ENCODE measurements at regions of chr22 and their contacts with region 1.

Region 1: DNA sequence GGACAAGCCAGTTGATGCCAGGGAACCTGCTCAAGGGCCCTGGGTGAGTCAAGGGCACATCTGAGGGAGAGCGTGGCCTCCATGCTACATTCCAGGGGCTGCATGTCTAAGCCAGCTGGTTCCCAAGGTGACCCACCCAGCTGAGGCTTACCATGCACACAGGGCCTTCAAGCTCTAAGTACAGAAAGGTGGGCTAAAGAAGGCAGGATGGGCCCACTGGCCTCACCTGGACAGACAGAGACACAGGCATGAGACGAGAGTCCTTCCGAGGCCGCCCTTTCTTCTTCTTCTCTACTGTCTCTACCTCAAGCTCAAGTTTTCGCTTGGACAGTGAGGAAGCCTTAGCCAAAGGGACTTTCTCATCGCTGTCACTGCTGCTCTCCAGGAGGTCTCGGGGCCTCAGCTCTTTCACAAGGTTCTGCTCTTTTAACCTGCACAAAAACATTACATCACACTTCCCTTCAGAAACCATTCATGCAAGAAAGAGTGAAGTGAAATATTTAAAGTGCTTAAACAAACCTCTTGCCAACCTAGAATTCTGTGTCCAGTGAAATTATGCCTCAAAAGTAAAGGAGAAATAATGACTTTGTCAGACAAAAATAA is 69.9 kb downstream of the HIRA start:
- DNase-seq: no peak
- ATAC-seq: no peak
- H3K4me3 ChIP-seq: no peak overlapping the region
- H3K27ac ChIP-seq: no peak overlapping the region
- H3K4me1 ChIP-seq: no peaks in the 10 kb centered on the region
- H3K27me3 ChIP-seq: no peaks in the 10 kb centered on the region
- CTCF ChIP-seq: no peak

Region 2: DNA sequence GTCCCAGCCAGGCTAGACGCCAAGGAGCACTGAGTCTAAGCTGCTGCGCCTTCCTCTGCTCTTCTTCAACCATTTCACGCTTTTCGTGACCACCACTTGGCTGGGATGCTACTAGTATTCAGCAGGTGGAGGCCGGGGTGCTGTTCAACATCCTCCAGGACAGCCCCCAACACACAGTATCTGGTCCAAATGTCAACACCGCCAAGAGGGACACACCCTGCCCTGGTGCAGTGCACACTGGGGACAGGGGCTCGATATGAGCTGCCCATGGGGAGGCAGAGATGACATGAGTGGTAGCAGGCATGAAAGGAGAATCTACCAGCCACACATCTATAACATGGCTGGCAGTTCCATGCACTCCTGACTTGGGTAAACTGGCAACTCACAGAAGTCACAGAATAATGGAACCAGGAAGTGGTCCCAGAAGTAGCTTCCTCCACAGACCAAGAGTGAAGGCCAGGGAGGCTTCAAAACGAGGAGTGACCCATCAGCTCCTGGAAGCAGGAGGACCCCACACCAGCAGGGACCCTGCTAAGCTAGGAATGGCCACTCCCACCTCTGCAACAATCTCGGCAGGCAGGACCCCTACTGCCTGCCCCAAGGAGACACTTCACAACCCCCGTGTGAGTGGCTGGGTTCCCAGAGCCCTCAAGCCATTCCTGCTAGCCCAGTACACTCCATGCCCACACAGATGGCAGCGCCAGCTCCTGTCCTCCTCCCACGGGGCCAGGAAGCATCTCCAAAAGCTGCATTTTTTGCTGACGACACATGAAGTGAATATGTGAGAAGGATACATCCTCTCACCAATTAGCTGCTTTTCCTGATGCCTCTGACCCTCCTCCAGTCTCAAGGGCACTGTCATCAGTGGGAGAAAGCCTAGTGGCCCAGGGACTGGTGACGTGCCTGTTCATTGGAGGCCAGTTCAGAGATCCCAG is 318.2 kb before region 1 on chr22:
- intact Hi-C with region 1: no loop called
- DNase-seq: peak in 1 of 2 donors; percentile 28
- ATAC-seq: no peak
- H3K4me3 ChIP-seq: no peak overlapping the region
- H3K27ac ChIP-seq: no peak overlapping the region
- H3K4me1 ChIP-seq: no peaks in the 10 kb centered on the region
- H3K27me3 ChIP-seq: no peaks in the 10 kb centered on the region
- CTCF ChIP-seq: no peak

Region 3: GRCh38 chr22:19058713-19059451 is 302.7 kb before region 1 on chr22:
- intact Hi-C with region 1: no loop called
- DNase-seq: no peak
- ATAC-seq: no peak
- H3K4me3 ChIP-seq: no peak overlapping the region
- H3K27ac ChIP-seq: no peak overlapping the region
- H3K4me1 ChIP-seq: peaks cover 6% of the 10 kb centered on the region
- H3K27me3 ChIP-seq: no peaks in the 10 kb centered on the region
- CTCF ChIP-seq: no peak

Region 4: GRCh38 chr22:19195796-19196731 is 165.5 kb before region 1 on chr22:
- intact Hi-C with region 1: loop called in 1 of 2 experiments (anchors 10 kb)
- DNase-seq: peak in 1 of 2 donors; percentile 54
- ATAC-seq: peak in 2 of 4 donors; percentile 13 to 15
- H3K4me3 ChIP-seq: no peak overlapping the region
- H3K27ac ChIP-seq: no peak overlapping the region
- H3K4me1 ChIP-seq: no peaks in the 10 kb centered on the region
- H3K27me3 ChIP-seq: no peaks in the 10 kb centered on the region
- CTCF ChIP-seq: no peak

Region 5: DNA sequence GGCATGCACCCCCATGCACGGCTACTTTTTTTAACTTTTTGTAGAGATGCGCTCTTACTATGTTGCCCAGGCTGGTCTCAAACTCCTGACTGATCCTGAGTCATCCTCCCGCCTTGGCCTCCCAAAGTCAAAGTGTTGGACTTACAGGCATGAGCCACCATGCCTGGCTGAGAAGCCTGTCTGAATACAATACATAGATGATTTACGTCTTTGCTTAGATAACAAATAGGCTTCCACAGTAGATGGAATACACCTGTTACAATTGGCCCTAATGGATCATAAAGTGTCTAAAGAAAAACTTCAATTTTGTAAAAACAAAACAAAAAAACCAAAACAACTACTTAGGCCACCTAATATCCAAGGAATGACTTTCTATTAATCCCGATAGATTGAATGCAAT is 57.1 kb before region 1 on chr22:
- intact Hi-C with region 1: loop called in 1 of 2 experiments (anchors 10 kb)
- DNase-seq: no peak
- ATAC-seq: no peak
- H3K4me3 ChIP-seq: no peak overlapping the region
- H3K27ac ChIP-seq: no peak overlapping the region
- H3K4me1 ChIP-seq: no peaks in the 10 kb centered on the region
- H3K27me3 ChIP-seq: no peaks in the 10 kb centered on the region
- CTCF ChIP-seq: no peak

Region 6: DNA sequence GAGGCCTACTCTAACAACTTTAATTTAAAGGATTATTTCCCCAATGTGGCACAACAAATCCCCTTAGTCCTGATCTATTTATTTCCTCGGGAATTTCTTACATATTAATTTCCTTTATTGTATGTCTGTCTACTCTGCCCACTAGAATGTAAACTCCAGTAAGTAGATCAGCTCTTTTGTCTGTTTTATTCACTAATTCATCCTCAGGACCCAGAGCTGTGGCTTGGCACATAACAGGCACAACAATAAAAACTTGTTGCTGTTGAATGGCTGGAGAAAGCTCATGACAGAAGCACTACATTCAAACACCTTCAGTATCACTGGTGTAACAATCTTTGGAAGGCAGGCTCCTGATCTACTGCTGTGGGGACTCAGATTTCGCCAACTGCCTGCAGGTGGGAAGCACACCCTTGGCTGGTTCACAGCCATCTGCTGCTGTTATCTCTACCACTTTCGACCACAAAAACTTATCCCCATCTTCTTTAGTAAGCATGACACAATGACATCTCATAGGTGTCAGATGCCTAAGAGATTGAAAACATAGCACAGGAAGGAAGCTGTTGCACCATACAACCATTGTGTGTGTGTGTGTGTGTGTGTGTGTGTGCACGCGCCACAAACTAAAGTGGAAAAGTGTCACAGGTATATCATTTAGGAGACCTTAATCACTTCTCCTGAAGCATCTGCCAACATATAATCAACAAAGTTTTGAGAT is 58.0 kb after region 1 on chr22:
- intact Hi-C with region 1: no loop called
- DNase-seq: no peak
- ATAC-seq: peak in 1 of 4 donors; percentile 30
- H3K4me3 ChIP-seq: no peak overlapping the region
- H3K27ac ChIP-seq: no peak overlapping the region
- H3K4me1 ChIP-seq: peaks cover 15% of the 10 kb centered on the region
- H3K27me3 ChIP-seq: no peaks in the 10 kb centered on the region
- CTCF ChIP-seq: no peak

Region 7: DNA sequence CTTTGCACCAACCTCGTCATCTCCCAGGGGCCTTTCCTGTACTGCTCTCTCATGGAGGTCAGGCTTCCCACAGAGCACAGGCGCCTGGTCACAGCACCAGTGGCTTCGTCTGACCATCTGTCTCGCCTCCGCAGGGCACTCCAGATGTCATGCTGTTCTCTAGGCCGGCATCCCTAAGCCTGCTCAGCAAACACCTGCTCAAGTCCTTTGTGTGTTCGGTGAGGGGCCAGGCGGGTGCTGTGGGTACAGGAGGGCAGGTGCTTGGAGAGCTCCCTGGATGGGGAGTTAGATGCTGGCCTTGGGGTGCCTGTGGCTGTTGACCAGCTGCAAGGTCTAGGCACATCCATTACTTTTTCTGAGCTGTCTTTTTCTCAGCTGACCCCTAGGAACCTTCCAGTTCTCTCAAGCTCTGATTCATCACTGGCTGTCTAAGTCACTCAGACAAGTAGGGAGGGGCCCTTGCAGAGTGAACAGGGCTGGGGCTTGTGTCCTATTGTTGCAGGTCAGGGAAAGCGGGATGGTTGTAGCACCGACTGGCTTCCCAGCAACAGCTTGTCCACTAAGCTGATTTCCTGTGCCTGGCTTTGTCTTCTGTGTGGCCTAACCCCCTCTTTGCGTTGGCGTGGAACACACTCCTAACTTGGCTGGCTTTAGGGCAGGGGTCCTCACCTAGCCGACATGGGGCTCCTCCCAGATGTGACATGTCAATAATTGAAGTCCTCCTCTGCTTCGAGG is 153.4 kb after region 1 on chr22:
- intact Hi-C with region 1: no loop called
- DNase-seq: no peak
- ATAC-seq: peak in 2 of 4 donors; percentile 20 to 65
- H3K4me3 ChIP-seq: no peak overlapping the region
- H3K27ac ChIP-seq: no peak overlapping the region
- H3K4me1 ChIP-seq: no peaks in the 10 kb centered on the region
- H3K27me3 ChIP-seq: peaks cover 0 to 1% (median 0%) of the 10 kb centered on the region in 3 donors
- CTCF ChIP-seq: no peak

Measured in psoas muscle (tissue), 8 donors.